ENCODE measurements at regions of chr7 and their contacts with region 1.

Region 1: GRCh38 chr7:39838326-39838725 is 111.7 kb upstream of the CDK13 start:
- DNase-seq: no peak
- ATAC-seq: no peak

Region 2: DNA sequence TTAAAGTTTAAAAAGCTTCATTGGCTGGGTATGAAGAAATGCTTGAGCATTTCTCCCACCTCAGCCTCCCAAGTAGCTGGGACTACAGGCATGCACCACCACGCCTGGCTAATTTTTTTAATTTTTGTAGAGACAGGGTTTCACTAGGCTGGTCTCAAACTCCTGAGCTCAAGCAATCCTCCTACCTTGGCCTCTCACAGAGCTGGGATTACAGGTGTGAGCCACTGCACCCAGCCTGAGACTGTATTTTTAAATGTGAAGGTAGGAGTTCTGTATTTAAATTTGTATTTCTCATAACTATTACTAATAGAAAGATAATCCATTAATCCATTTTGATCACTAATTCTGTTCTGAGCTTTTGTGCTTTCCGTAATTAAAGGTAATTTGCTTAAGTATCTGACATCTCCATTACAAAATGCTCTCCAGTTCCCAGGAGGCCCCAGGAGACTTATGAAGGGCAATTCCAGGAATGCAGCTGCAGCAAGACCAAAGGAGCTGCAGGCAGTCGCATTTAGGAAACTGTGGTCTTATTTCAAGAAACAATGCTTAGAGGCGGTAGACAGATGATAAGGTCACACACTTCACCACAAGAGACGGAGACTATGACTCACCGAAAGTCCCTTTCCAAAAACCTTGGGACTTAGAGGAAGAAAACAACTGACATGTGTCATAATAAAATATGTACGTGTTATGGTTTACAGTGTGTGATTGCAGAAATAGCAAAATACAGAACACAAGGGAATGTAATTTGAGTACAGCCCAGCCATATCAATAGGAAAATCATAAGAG is 248.8 kb before region 1 on chr7:
- intact Hi-C with region 1: no loop called
- DNase-seq: no peak
- ATAC-seq: peak; percentile 41

Region 3: GRCh38 chr7:39855325-39855674 is 17.0 kb after region 1 on chr7:
- intact Hi-C with region 1: no loop called
- DNase-seq: no peak
- ATAC-seq: no peak

Region 4: GRCh38 chr7:39979406-39980073 is 141.2 kb after region 1 on chr7:
- intact Hi-C with region 1: no loop called
- DNase-seq: no peak
- ATAC-seq: no peak

Region 5: GRCh38 chr7:41274179-41274578 is 1435.9 kb after region 1 on chr7:
- intact Hi-C with region 1: loop called (anchors 5 kb)
- DNase-seq: no peak
- ATAC-seq: no peak

Measured in sciatic nerve (tissue), 2 donors.